Mammary epithelial cell (primary cell): ENCODE measurements at regions of chr6 and their contacts with region 1.

Region 1: DNA sequence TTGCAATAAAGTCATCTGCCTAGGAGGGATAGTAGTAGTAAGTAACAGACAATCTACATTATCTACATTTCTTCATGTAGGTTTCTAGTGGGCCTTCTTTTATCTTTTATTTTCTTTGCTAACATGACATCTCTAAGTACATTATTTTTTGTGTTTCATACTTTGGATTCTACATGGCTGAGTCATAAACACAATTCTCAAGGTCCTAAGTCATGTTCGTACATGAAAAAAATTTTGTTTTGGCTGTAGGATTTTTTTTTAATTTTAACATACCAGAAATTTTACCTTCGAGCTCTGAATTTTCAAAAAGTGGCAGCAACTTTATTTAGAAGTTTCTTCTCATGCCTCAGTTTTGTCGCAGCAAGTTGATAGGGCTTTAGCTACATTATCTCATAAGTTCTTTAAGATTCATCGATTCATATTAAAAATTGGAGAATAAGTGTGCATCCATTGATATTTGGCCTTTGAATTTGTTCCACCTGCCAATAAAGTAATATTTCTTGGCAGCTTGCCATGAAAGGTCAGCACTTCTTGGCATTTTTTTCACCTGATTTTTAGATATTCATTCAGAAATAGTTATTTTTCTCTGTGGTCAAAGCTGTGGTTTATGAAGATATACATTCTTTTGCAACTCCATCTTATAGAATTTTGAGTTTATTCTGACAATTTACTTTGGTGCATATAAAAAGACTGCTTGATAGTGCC is 146.2 kb downstream of the GRIK2 start:
- DNase-seq: peak; percentile 32
- H3K4me3 ChIP-seq: no peak overlapping the region
- H3K27ac ChIP-seq: no peak overlapping the region
- H3K4me1 ChIP-seq: peaks cover 15% of the 10 kb centered on the region
- H3K27me3 ChIP-seq: no peaks in the 10 kb centered on the region
- CTCF ChIP-seq: no peak

Region 2: GRCh38 chr6:101666256-101666655 is 126.6 kb after region 1 on chr6:
- CTCF ChIA-PET with region 1: no interaction called
- dilution Hi-C with region 1: no loop called
- in situ Hi-C with region 1: no loop called
- intact Hi-C with region 1: loop called (anchors 10 kb)
- DNase-seq: peak; percentile 96
- H3K4me3 ChIP-seq: no peak overlapping the region
- H3K27ac ChIP-seq: peak overlapping the region; percentile 85
- H3K4me1 ChIP-seq: peaks cover 30% of the 10 kb centered on the region
- H3K27me3 ChIP-seq: no peaks in the 10 kb centered on the region
- CTCF ChIP-seq: no peak